ENCODE measurements at regions of chr5 and their contacts with region 1.

Region 1: DNA sequence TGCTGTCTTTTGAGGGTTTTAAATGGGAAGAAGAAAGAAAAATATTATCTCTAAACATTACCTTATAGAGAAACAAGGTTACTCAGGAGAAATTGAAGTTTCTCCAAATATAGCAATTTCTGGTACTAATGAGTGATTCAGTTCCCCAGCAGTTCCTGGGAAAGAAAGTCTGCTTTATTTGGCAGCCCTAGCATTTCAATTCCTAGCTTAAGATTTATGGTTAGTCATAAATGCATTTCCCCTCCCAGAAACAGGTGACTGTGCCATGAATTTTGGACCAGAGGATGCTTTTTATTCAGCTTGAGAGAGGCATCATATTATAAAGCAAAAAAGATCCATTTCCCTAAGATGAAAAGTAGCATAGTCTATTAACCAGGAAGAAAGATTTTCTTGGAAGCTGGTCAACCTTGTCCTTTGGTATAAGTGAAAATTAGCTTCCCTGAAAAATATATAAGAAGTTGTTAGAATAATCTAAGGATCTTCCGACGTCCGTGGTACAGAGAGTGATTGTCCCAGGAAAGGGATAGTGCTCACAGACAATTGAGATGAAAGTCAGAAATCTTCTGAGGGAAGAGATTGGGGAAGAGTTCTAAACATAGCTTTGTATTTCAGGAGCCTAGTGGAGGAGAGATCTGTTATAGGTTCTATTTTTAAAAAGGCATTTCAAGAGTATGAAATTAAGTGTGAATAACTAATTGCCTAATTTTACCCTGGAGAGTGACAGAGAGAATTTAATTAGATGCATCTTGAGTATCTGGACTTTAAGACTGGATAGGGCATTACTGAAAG is 164.9 kb downstream of the ESM1 start:
- DNase-seq: no peak
- ATAC-seq: no peak
- H3K4me3 ChIP-seq: no peak overlapping the region
- H3K4me3 Mint-ChIP-seq: no peak overlapping the region
- H3K27ac ChIP-seq: no peak overlapping the region
- H3K27ac Mint-ChIP-seq: no peak overlapping the region
- H3K4me1 ChIP-seq: no peaks in the 10 kb centered on the region
- H3K4me1 Mint-ChIP-seq: no peaks in the 10 kb centered on the region
- H3K27me3 ChIP-seq: no peaks in the 10 kb centered on the region
- H3K27me3 Mint-ChIP-seq: peaks cover 3% of the 10 kb centered on the region in 2 donors

Region 2: DNA sequence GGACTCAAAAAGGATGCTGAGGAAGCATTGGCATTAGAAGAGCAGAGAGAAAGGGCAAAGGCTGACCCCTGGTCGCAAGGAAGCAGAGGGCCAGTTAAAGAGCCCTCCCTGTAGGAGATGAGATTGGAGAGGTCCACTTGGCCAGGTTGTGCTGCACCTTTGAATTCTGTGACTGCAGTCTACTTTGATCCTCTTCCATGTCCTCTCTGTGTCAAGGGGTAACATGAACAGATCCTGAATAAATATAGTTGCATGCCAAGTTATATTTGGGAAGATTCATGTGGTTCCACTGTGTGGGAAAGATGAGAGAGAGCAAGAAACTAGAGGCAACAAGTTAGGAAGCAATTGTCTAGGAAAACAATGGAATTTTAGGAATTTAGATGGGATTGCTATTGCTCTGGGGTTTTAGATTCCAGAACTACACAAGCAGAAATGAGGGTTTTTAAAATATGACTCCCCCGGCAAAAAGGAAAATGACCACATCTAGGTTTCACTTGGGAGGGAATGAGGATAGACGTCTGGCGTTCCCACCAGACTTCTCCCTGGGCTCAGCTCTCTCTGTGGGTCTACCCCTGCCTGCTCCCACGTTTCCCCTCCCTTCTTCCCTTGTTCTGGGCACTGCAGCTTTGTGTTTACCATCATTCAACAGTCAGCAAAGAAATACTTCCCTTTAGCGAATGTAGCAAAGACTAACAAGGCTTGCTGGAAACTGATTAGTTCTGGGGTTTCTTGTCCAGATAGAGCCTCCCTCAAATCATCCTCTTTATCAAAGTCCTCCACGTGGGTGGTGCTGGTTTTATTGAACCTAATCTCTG is 239.3 kb before region 1 on chr5:
- CTCF ChIA-PET with region 1: interaction called in 1 of 2 experiments, 12 read pairs
- POLR2A ChIA-PET with region 1: no interaction called
- DNase-seq: no peak
- ATAC-seq: no peak
- H3K4me3 ChIP-seq: no peak overlapping the region
- H3K4me3 Mint-ChIP-seq: no peak overlapping the region
- H3K27ac ChIP-seq: no peak overlapping the region
- H3K27ac Mint-ChIP-seq: no peak overlapping the region
- H3K4me1 ChIP-seq: peaks cover 0 to 3% of the 10 kb centered on the region in 2 experiments
- H3K4me1 Mint-ChIP-seq: peaks cover 4 to 17% (median 5%) of the 10 kb centered on the region in 3 donors
- H3K27me3 ChIP-seq: peaks cover 0 to 3% of the 10 kb centered on the region in 2 experiments
- H3K27me3 Mint-ChIP-seq: no peaks in the 10 kb centered on the region

Region 3: GRCh38 chr5:55102348-55102747 is 281.8 kb after region 1 on chr5 and contains the start of gene GZMA:
- CTCF ChIA-PET with region 1: no interaction called
- POLR2A ChIA-PET with region 1: no interaction called
- DNase-seq: peak in 32 of 35 experiments; percentile 13 to 74 (median 35)
- ATAC-seq: peak; percentile 73 to 89 (median 76)
- H3K4me3 ChIP-seq: peak within 1 kb of the TSS; percentile 43 to 56
- H3K4me3 Mint-ChIP-seq: peak within 1 kb of the TSS; percentile 76 to 93 (median 84)
- H3K27ac ChIP-seq: peak within 1 kb of the TSS; percentile 70
- H3K27ac Mint-ChIP-seq: peak within 1 kb of the TSS; percentile 86 to 95
- H3K4me1 ChIP-seq: peaks cover 43 to 44% of the 10 kb centered on the region in 2 experiments
- H3K4me1 Mint-ChIP-seq: peaks cover 75 to 90% (median 87%) of the 10 kb centered on the region in 3 donors
- H3K27me3 ChIP-seq: no peaks in the 10 kb centered on the region
- H3K27me3 Mint-ChIP-seq: no peaks in the 10 kb centered on the region
- total RNA-seq, gene GZMA: 9.9 to 86.0 (median 37.2) TPM